Activated naive CD4-positive, alpha-beta T cell treated with anti-CD3 and anti-CD28 coated beads for 36 hours (primary cell): ENCODE measurements at regions of chr10 and their contacts with region 1.

Region 1: DNA sequence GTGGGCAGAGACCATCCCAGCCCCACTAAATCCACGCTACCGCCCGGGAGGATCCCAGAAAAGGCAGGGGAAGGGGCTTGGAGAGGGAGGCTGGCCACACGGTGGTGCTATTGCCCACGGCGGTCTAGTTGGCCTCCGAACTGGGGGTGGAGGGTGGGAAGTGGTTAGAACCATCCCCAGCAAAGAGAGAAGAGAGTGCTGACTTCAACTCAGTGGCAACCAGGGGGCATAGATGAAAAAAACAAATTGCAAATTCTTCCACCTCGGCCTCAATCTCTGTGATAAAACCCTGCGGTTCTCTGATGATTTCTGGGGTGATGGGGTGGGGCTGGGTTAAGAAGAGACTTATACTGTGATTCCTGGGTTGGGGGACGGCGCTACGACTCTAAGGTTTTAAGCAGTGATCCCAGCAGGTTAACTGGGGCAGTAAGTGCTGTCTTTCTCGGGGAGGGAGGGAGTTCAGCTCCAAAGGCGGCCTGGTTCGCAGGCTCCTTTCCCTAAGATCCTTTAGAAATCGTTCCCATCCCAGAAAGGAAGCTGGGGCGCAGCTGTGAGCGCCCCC is 154.5 kb upstream of the LYZL2 start:
- DNase-seq: peak; percentile 89
- H3K4me3 Mint-ChIP-seq: peak overlapping the region; percentile 69
- H3K27ac Mint-ChIP-seq: peak overlapping the region; percentile 0
- H3K4me1 Mint-ChIP-seq: peaks cover 17% of the 10 kb centered on the region
- H3K27me3 Mint-ChIP-seq: no peaks in the 10 kb centered on the region

Region 2: DNA sequence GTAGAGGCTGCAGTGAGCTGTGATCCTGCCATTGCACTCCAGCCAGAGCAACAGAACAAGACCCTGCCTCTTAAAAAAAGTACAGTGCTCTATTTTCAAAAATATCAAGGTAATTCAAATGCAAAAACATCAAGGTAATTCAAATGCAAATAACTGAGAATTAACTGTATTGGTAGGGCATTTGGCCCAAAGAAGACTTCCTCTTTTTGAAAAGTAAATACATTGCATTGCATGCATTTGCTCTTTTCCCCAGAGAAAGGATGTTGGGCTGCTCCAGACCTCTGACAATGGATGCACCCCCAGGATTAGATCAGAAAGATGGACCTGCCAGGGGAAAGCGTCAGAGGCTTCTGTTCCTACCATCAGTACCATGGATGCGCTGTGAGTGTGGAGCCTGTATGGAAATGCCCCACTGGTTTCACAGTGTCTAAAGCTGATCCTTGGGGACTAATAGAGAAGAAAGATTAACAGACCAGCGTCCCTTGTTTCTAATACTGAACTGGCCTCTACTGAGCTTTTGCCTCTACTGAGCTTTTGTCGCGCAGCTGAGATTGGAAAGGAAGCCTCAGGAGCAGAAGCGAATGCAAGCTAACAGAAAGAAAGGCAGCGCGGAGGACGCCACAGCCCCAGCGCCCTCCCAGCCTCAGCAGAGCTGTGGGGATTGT is 60.9 kb before region 1 on chr10:
- CTCF ChIA-PET with region 1: interaction called, 6 read pairs
- intact Hi-C with region 1: loop called (anchors 1 kb)
- DNase-seq: no peak
- H3K4me3 Mint-ChIP-seq: no peak overlapping the region
- H3K27ac Mint-ChIP-seq: no peak overlapping the region
- H3K4me1 Mint-ChIP-seq: no peaks in the 10 kb centered on the region
- H3K27me3 Mint-ChIP-seq: no peaks in the 10 kb centered on the region

Region 3: DNA sequence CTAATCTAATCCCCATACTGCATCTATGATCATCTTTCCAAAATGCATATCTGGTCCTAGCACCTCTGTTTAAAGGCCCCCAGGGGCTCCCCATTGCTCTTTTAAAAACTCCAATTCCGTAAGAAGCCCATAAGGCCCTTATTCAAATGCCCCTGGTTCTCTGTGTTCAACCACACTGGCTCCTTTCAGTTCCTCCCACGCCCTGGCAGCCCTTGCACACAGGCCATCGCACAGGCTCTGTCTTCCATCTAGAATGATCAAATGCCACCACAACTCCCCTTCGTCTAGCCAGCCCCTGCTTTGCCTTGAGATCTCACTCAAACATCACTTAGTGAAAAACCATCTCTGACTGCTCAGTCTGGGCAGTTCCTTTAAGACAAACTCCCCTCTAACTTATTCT is 41.5 kb before region 1 on chr10:
- CTCF ChIA-PET with region 1: no interaction called
- intact Hi-C with region 1: no loop called
- DNase-seq: no peak
- H3K4me3 Mint-ChIP-seq: no peak overlapping the region
- H3K27ac Mint-ChIP-seq: no peak overlapping the region
- H3K4me1 Mint-ChIP-seq: no peaks in the 10 kb centered on the region
- H3K27me3 Mint-ChIP-seq: no peaks in the 10 kb centered on the region

Region 4: DNA sequence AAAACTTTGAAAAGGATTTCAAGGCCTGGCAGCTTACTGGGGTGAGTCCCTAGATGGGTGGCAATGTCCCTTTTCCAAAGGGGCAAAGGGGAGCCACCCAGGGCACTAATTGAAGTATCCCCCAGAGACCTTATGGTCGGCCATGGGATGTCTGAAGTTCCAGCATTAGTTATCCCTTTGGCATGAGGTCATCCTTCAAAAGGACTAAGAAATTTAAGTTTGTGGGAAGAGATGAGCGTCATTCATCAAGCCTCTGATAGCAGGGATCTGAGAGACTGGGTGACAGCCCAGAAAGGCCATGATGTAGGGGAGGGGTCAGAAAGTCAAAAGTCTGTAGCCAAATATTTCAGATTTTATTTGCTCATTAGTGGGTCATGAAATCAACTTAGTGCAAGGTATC is 52.4 kb after region 1 on chr10:
- CTCF ChIA-PET with region 1: no interaction called
- intact Hi-C with region 1: no loop called
- DNase-seq: no peak
- H3K4me3 Mint-ChIP-seq: no peak overlapping the region
- H3K27ac Mint-ChIP-seq: no peak overlapping the region
- H3K4me1 Mint-ChIP-seq: no peaks in the 10 kb centered on the region
- H3K27me3 Mint-ChIP-seq: no peaks in the 10 kb centered on the region

Region 5: DNA sequence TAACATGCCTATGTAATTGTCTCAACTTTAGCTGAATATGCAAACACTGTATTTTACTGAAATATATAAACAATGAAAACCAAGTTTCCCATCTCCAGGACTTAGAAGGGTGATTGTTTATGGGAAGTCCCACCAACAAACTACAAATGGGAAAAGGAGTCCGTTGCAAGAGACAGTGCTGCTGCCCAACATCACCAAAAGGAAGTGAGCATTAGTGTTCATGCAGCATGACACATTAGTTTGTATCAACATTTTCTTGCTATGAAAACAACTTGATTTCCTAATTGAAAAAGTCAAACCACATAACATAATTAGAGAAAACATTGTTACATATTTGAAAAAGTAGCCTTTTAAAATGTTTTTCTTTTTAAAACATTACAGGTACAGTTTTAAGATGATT is 109.2 kb after region 1 on chr10:
- CTCF ChIA-PET with region 1: no interaction called
- intact Hi-C with region 1: no loop called
- DNase-seq: no peak
- H3K4me3 Mint-ChIP-seq: no peak overlapping the region
- H3K27ac Mint-ChIP-seq: no peak overlapping the region
- H3K4me1 Mint-ChIP-seq: peaks cover 8% of the 10 kb centered on the region
- H3K27me3 Mint-ChIP-seq: no peaks in the 10 kb centered on the region

Region 6: DNA sequence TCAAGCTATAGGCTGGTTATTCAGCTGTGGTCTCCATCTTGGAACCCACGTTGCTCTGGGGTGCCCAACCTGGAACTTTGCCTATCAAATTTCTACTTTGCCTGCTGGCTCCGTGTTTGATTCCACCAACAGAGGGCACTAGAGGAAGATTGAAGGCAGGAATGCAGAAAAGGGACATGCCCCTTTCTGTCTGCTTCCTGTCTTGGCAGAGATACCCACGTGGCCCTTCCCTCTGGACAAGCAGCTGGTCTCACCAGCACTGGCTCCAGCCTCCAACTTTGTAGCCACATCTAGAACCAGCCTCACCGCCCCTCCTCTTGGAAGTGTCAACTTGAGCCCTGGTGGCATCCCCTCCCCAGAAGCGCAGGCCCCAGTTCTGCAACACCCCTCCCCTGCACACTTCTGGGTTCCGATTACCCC is 299.8 kb after region 1 on chr10:
- CTCF ChIA-PET with region 1: interaction called, 3 read pairs
- intact Hi-C with region 1: loop called (anchors 1 kb)
- DNase-seq: peak; percentile 86
- H3K4me3 Mint-ChIP-seq: no peak overlapping the region
- H3K27ac Mint-ChIP-seq: peak overlapping the region; percentile 54
- H3K4me1 Mint-ChIP-seq: peaks cover 6% of the 10 kb centered on the region
- H3K27me3 Mint-ChIP-seq: no peaks in the 10 kb centered on the region

Region 7: GRCh38 chr10:31353574-31353973 is 569.6 kb after region 1 on chr10:
- CTCF ChIA-PET with region 1: no interaction called
- intact Hi-C with region 1: loop called (anchors 10 kb)
- DNase-seq: peak; percentile 40
- H3K4me3 Mint-ChIP-seq: no peak overlapping the region
- H3K27ac Mint-ChIP-seq: no peak overlapping the region
- H3K4me1 Mint-ChIP-seq: peaks cover 60% of the 10 kb centered on the region
- H3K27me3 Mint-ChIP-seq: no peaks in the 10 kb centered on the region

Region 8: DNA sequence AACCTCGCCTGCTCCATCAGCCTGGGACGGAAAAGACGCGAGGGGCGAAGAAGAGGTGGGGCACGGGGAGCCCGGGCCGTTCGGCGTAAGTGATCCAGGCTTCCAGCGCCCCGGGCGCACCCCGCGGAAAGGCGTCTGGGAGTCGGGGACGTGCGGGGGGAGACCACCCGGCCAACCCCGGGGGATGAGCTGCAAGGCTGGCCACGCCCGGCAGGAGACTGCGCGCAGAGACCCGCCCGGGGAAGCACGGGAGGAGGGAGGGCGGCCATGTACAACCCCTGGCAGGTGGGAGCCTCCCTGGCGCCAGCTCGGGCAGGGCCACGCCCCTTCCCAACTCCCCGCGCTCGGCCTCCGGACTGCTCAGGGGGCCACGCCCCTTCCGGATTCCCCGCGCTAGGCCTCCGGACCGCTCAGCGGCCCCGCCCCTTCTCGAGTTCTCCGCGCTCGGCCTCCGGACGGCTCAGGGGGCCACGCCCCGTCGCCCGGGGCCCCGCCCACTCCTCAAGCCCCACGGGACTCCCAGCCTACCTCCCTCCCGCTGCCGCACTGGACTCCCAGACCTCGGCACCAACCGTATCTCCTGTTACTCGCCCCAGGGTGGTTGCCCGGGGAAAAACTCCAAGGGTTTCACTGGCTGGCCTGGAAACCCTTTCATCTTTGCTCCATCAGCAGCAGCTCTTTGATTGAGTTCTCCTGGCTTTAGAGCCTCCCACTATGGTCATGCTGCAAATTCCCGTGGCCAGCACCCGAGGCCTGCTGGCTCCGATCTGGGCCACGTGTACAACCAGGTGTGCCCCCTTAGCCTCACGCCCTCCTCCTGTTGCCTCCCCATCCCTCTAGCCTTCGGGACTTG is 819.4 kb after region 1 on chr10:
- CTCF ChIA-PET with region 1: no interaction called
- intact Hi-C with region 1: loop called (anchors 5 kb)
- DNase-seq: peak; percentile 92
- H3K4me3 Mint-ChIP-seq: peak overlapping the region; percentile 86
- H3K27ac Mint-ChIP-seq: peak overlapping the region; percentile 58
- H3K4me1 Mint-ChIP-seq: peaks cover 31% of the 10 kb centered on the region
- H3K27me3 Mint-ChIP-seq: peaks cover 2% of the 10 kb centered on the region